ENCODE measurements at regions of chr6 and their contacts with region 1.

Region 1: DNA sequence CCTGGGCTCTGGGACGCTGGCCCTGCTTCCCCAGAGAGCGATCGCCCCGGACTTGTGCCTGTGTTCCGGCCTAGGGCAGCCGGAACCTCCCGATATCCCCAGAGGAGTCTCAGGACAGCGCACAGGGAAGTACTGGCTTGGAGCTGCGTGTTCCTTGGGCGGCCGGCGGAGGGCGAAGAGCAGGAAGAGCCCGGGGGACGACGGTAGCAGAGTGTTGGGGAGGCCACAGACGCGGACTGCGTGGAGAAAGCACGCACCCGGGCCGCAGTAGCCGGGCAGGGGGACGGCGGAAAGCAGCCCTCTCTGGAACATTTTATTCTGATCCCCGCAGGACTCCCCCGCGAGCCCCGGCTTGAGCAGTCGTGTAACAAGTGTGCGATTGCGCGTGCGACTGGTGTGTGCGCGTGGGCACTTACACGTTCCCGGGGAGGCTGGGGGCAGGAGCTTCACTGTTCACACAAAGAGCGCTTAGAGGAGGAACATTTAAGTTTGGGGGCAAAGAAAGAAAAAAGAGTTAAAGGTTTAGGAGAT is 36.1 kb downstream of the NCR2 start:
- DNase-seq: peak in 3 of 4 donors; percentile 22 to 46 (median 43)
- ATAC-seq: no peak
- H3K4me3 ChIP-seq: no peak overlapping the region
- H3K27ac ChIP-seq: no peak overlapping the region
- H3K4me1 ChIP-seq: peaks cover 46% of the 10 kb centered on the region
- H3K27me3 ChIP-seq: peaks cover 0 to 30% of the 10 kb centered on the region in 2 donors
- CTCF ChIP-seq: peak in 2 of 7 experiments; percentile 18 to 20
- POLR2A ChIP-seq: no peak

Region 2: GRCh38 chr6:41675176-41675770 is 303.7 kb after region 1 on chr6:
- intact Hi-C with region 1: loop called (anchors 5 kb)
- DNase-seq: no peak
- ATAC-seq: no peak
- H3K4me3 ChIP-seq: no peak overlapping the region
- H3K27ac ChIP-seq: no peak overlapping the region
- H3K4me1 ChIP-seq: no peaks in the 10 kb centered on the region
- H3K27me3 ChIP-seq: no peaks in the 10 kb centered on the region
- CTCF ChIP-seq: no peak
- POLR2A ChIP-seq: no peak

Measured in body of pancreas (tissue), 4 donors.